PC-3 (cell line): ENCODE measurements at regions of chr13 and their contacts with region 1.

Region 1: GRCh38 chr13:42559057-42559456 is 14.9 kb upstream of the TNFSF11 start:
- DNase-seq: no peak
- ATAC-seq: no peak
- H3K4me3 ChIP-seq: no peak overlapping the region
- H3K27ac ChIP-seq: no peak overlapping the region
- H3K4me1 ChIP-seq: peaks cover 4% of the 10 kb centered on the region
- H3K27me3 ChIP-seq: no peaks in the 10 kb centered on the region
- CTCF ChIP-seq: no peak

Region 2: GRCh38 chr13:42298405-42298804 is 260.7 kb before region 1 on chr13:
- CTCF ChIA-PET with region 1: no interaction called
- POLR2A ChIA-PET with region 1: no interaction called
- intact Hi-C with region 1: no loop called
- DNase-seq: peak; percentile 28
- ATAC-seq: no peak
- H3K4me3 ChIP-seq: no peak overlapping the region
- H3K27ac ChIP-seq: no peak overlapping the region
- H3K4me1 ChIP-seq: 0 out of 2 replicates have a peak, but pooled peaks cover 5% of the 10 kb centered on the region
- H3K27me3 ChIP-seq: no peaks in the 10 kb centered on the region
- CTCF ChIP-seq: no peak

Region 3: GRCh38 chr13:42384260-42384659 is 174.8 kb before region 1 on chr13:
- CTCF ChIA-PET with region 1: interaction called, 3 read pairs
- POLR2A ChIA-PET with region 1: no interaction called
- intact Hi-C with region 1: loop called (anchors 2 kb)
- DNase-seq: peak; percentile 59
- ATAC-seq: peak; percentile 86
- H3K4me3 ChIP-seq: no peak overlapping the region
- H3K27ac ChIP-seq: no peak overlapping the region
- H3K4me1 ChIP-seq: no peaks in the 10 kb centered on the region
- H3K27me3 ChIP-seq: no peaks in the 10 kb centered on the region
- CTCF ChIP-seq: no peak

Region 4: DNA sequence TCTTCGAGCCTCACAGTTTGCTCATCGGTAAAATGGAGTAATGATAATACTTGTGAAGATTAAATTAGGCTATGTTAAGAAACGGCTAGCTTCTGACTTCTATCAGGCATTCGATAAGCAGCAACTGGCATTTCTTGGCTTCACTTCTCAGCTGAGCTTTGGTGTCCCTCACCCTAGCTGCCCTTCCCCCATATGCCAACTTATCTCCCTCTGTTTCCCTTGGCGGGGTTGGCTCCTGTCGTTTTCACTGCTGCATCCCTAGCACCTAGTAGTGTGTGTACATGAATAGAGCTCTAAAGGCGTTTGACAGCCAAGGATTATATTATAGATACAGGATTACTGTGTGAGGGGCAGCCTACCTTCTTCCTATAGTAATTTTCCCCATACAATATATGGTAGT is 112.4 kb after region 1 on chr13:
- CTCF ChIA-PET with region 1: no interaction called
- POLR2A ChIA-PET with region 1: no interaction called
- intact Hi-C with region 1: no loop called
- DNase-seq: no peak
- ATAC-seq: no peak
- H3K4me3 ChIP-seq: no peak overlapping the region
- H3K27ac ChIP-seq: no peak overlapping the region
- H3K4me1 ChIP-seq: no peaks in the 10 kb centered on the region
- H3K27me3 ChIP-seq: no peaks in the 10 kb centered on the region
- CTCF ChIP-seq: no peak